Psoas muscle (tissue), 8 donors: ENCODE measurements at regions of chr5 and their contacts with region 1.

Region 1: DNA sequence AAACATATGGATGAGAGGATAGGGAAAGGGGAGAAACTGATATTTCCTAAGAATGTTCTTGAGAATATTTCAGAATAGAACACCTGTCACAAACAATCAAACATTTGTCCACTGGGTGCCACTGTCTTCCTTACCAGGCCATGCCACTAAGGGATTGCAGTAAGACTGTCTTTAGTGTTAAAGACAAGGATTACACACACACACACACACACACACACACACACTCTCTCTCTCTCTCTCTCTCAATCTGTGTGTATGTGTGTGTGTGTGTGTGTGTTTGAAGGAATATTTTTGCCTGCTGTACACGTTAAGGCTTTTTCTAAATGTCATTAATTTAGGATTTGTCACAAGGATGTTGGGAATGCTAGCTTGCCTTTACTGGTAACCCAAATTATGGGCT is 54.4 kb downstream of the CCDC192 start:
- DNase-seq: no peak
- ATAC-seq: peak; percentile 65 to 95 (median 87)
- H3K4me3 ChIP-seq: no peak overlapping the region
- H3K27ac ChIP-seq: no peak overlapping the region
- H3K4me1 ChIP-seq: peaks cover 11% of the 10 kb centered on the region
- H3K27me3 ChIP-seq: no peaks in the 10 kb centered on the region
- CTCF ChIP-seq: peak; percentile 56

Region 2: GRCh38 chr5:127697894-127698600 is 59.5 kb before region 1 on chr5:
- intact Hi-C with region 1: no loop called
- DNase-seq: no peak
- ATAC-seq: no peak
- H3K4me3 ChIP-seq: peak overlapping the region; percentile 41
- H3K27ac ChIP-seq: peak overlapping the region; percentile 86
- H3K4me1 ChIP-seq: peaks cover 24% of the 10 kb centered on the region
- H3K27me3 ChIP-seq: no peaks in the 10 kb centered on the region
- CTCF ChIP-seq: no peak

Region 3: DNA sequence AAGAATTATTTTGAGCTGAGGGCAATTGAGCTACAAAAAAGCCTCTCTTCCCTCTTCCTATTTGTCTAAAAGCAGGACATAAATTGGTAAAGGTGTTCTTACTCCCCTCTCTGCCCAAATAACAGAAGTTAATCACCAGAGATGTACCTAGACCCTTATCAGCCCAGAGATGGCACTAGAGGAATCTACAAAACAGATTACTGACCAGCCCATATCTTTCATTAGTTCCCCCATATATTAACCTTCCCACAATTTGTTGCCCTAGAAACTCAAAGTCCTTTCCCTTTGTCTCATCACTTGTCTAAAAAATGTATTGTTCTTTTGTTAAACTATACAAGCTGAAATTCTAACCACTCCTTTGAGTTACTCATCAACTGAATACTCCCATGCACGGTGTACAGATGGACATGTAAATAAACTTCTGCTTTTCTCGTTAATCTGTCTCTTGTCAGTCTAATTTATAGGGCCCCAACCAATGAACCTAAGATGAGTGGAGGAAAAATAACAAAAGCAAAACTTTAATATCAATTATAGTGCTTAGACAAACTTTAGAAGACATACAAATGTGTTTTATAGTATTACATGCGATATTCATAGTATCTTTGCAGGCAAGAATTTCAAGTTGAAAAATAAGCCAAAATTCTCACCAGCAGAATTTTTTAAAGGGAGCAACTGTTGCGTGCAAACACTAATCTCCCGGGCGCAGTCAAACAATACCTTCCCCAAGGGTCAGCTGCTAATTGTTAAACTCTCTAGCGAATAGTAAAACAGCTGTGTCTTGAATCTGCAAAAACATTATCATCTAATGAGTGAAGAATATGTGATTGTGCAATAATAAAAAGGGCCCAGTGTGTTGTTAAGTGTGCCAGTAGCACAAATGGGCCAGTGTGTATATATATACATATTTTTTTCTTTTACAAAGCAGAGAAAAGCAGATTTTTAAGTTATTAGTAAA is 76.7 kb after region 1 on chr5:
- intact Hi-C with region 1: loop called in 1 of 2 experiments (anchors 5 kb)
- DNase-seq: no peak
- ATAC-seq: peak in 1 of 4 donors; percentile 44
- H3K4me3 ChIP-seq: no peak overlapping the region
- H3K27ac ChIP-seq: no peak overlapping the region
- H3K4me1 ChIP-seq: peaks cover 13% of the 10 kb centered on the region
- H3K27me3 ChIP-seq: no peaks in the 10 kb centered on the region
- CTCF ChIP-seq: no peak